Naive thymus-derived CD4-positive, alpha-beta T cell (primary cell): ENCODE measurements at regions of chr3 and their contacts with region 1.

Region 1: GRCh38 chr3:31918179-31919168 is 62.6 kb downstream of the OSBPL10 start:
- DNase-seq: peak in 4 of 9 donors; percentile 3 to 34 (median 29)
- ATAC-seq: no peak
- H3K4me3 ChIP-seq: no peak overlapping the region
- H3K4me3 Mint-ChIP-seq: peak overlapping the region in 9 of 10 donors; percentile 14 to 85 (median 77)
- H3K27ac ChIP-seq: no peak overlapping the region
- H3K27ac Mint-ChIP-seq: peak overlapping the region in 8 of 9 donors; percentile 53 to 96 (median 78)
- H3K4me1 ChIP-seq: peaks cover 0 to 10% of the 10 kb centered on the region in 2 donors
- H3K4me1 Mint-ChIP-seq: peaks cover 3 to 46% (median 22%) of the 10 kb centered on the region in 7 donors
- H3K27me3 ChIP-seq: no peaks in the 10 kb centered on the region
- H3K27me3 Mint-ChIP-seq: no peaks in the 10 kb centered on the region

Region 2: DNA sequence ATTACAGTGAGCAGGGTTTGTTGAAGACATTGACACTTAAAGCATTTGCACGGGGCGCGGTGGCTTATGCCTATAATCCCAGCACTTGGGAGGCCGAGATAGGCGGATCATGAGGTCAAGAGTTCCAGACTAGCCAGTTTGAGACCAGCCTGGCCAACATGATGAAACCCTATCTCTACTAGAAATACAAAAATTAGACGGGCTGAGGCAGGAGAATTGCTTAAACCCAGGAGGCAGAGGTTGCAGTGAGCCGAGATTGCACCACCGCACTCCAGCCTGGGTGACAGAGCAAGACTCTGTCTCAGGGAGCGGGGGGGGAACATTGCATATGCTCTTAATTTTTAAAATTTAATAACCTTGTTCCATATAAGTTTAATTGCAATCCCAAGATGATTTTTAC is 373.8 kb before region 1 on chr3:
- CTCF ChIA-PET with region 1: no interaction called
- POLR2A ChIA-PET with region 1: no interaction called
- intact Hi-C with region 1: loop called in 1 of 2 experiments (anchors 5 kb)
- DNase-seq: no peak
- ATAC-seq: peak; percentile 33
- H3K4me3 ChIP-seq: no peak overlapping the region
- H3K4me3 Mint-ChIP-seq: peak overlapping the region in 9 of 10 donors; percentile 29 to 75 (median 70)
- H3K27ac ChIP-seq: peak overlapping the region; percentile 12
- H3K27ac Mint-ChIP-seq: peak overlapping the region in 8 of 9 donors; percentile 7 to 76 (median 44)
- H3K4me1 ChIP-seq: peaks cover 21 to 32% of the 10 kb centered on the region in 2 donors
- H3K4me1 Mint-ChIP-seq: peaks cover 55 to 99% (median 90%) of the 10 kb centered on the region in 7 donors
- H3K27me3 ChIP-seq: no peaks in the 10 kb centered on the region
- H3K27me3 Mint-ChIP-seq: no peaks in the 10 kb centered on the region

Region 3: GRCh38 chr3:31960793-31961431 is 42.4 kb after region 1 on chr3:
- CTCF ChIA-PET with region 1: no interaction called
- POLR2A ChIA-PET with region 1: no interaction called
- intact Hi-C with region 1: loop called in 1 of 2 experiments (anchors 5 kb)
- DNase-seq: no peak
- ATAC-seq: no peak
- H3K4me3 ChIP-seq: no peak overlapping the region
- H3K4me3 Mint-ChIP-seq: no peak overlapping the region
- H3K27ac ChIP-seq: no peak overlapping the region
- H3K27ac Mint-ChIP-seq: no peak overlapping the region
- H3K4me1 ChIP-seq: peaks cover 0 to 3% of the 10 kb centered on the region in 2 donors
- H3K4me1 Mint-ChIP-seq: peaks cover 5 to 23% (median 11%) of the 10 kb centered on the region in 7 donors
- H3K27me3 ChIP-seq: no peaks in the 10 kb centered on the region
- H3K27me3 Mint-ChIP-seq: peaks cover 0 to 9% (median 0%) of the 10 kb centered on the region in 5 donors

Region 4: GRCh38 chr3:31981206-31982181 is 63.0 kb after region 1 on chr3 and contains the starts of genes OSBPL10 and ZNF860:
- CTCF ChIA-PET with region 1: no interaction called
- POLR2A ChIA-PET with region 1: no interaction called
- intact Hi-C with region 1: loop called in 1 of 2 experiments (anchors 2 kb)
- DNase-seq: peak in 6 of 9 donors; percentile 2 to 32 (median 8)
- ATAC-seq: peak; percentile 63
- H3K4me3 ChIP-seq: peak within 1 kb of the TSS; percentile 56
- H3K4me3 Mint-ChIP-seq: peak within 1 kb of the TSS; percentile 82 to 95 (median 88)
- H3K27ac ChIP-seq: no peak within 1 kb of the TSS
- H3K27ac Mint-ChIP-seq: peak within 1 kb of the TSS in 3 of 9 donors; percentile 10 to 84 (median 16)
- H3K4me1 ChIP-seq: no peaks in the 10 kb centered on the region
- H3K4me1 Mint-ChIP-seq: peaks cover 0 to 26% (median 12%) of the 10 kb centered on the region in 7 donors
- H3K27me3 ChIP-seq: peaks cover 8 to 9% of the 10 kb centered on the region in 2 donors
- H3K27me3 Mint-ChIP-seq: peaks cover 24 to 57% (median 39%) of the 10 kb centered on the region in 5 donors
- total RNA-seq, gene OSBPL10: 0.30 to 6.8 (median 1.5) TPM
- total RNA-seq, gene ZNF860: 0.11 to 0.32 (median 0.15) TPM in 3 of 5 experiments, not detected in the others

Region 5: GRCh38 chr3:32113566-32113965 is 195.1 kb after region 1 on chr3:
- CTCF ChIA-PET with region 1: no interaction called
- POLR2A ChIA-PET with region 1: no interaction called
- intact Hi-C with region 1: loop called in 1 of 2 experiments (anchors 2 kb)
- DNase-seq: no peak
- ATAC-seq: no peak
- H3K4me3 ChIP-seq: no peak overlapping the region
- H3K4me3 Mint-ChIP-seq: peak overlapping the region in 8 of 10 donors; percentile 70 to 90 (median 82)
- H3K27ac ChIP-seq: no peak overlapping the region
- H3K27ac Mint-ChIP-seq: peak overlapping the region in 8 of 9 donors; percentile 74 to 95 (median 92)
- H3K4me1 ChIP-seq: peaks cover 18 to 25% of the 10 kb centered on the region in 2 donors
- H3K4me1 Mint-ChIP-seq: peaks cover 32 to 95% (median 82%) of the 10 kb centered on the region in 7 donors
- H3K27me3 ChIP-seq: no peaks in the 10 kb centered on the region
- H3K27me3 Mint-ChIP-seq: no peaks in the 10 kb centered on the region

Region 6: GRCh38 chr3:32302601-32303398 is 384.3 kb after region 1 on chr3:
- CTCF ChIA-PET with region 1: no interaction called
- POLR2A ChIA-PET with region 1: no interaction called
- intact Hi-C with region 1: loop called in 1 of 2 experiments (anchors 10 kb)
- DNase-seq: peak in 1 of 9 donors; percentile 12
- ATAC-seq: no peak
- H3K4me3 ChIP-seq: peak overlapping the region; percentile 8
- H3K4me3 Mint-ChIP-seq: peak overlapping the region; percentile 72 to 88 (median 80)
- H3K27ac ChIP-seq: peak overlapping the region; percentile 66
- H3K27ac Mint-ChIP-seq: peak overlapping the region; percentile 94 to 99 (median 96)
- H3K4me1 ChIP-seq: peaks cover 29 to 33% of the 10 kb centered on the region in 2 donors
- H3K4me1 Mint-ChIP-seq: peaks cover 27 to 79% (median 70%) of the 10 kb centered on the region in 7 donors
- H3K27me3 ChIP-seq: no peaks in the 10 kb centered on the region
- H3K27me3 Mint-ChIP-seq: no peaks in the 10 kb centered on the region

Region 7: GRCh38 chr3:32438596-32439344 is 520.3 kb after region 1 on chr3:
- CTCF ChIA-PET with region 1: no interaction called
- POLR2A ChIA-PET with region 1: no interaction called
- intact Hi-C with region 1: loop called in 1 of 2 experiments (anchors 10 kb)
- DNase-seq: peak in 1 of 9 donors; percentile 24
- ATAC-seq: peak; percentile 65
- H3K4me3 ChIP-seq: no peak overlapping the region
- H3K4me3 Mint-ChIP-seq: peak overlapping the region in 6 of 10 donors; percentile 1 to 80 (median 46)
- H3K27ac ChIP-seq: no peak overlapping the region
- H3K27ac Mint-ChIP-seq: peak overlapping the region; percentile 45 to 87 (median 80)
- H3K4me1 ChIP-seq: peaks cover 42 to 47% of the 10 kb centered on the region in 2 donors
- H3K4me1 Mint-ChIP-seq: peaks cover 29 to 88% (median 78%) of the 10 kb centered on the region in 7 donors
- H3K27me3 ChIP-seq: no peaks in the 10 kb centered on the region
- H3K27me3 Mint-ChIP-seq: no peaks in the 10 kb centered on the region

Region 8: GRCh38 chr3:33131331-33132018 is 1213.0 kb after region 1 on chr3:
- CTCF ChIA-PET with region 1: no interaction called
- POLR2A ChIA-PET with region 1: no interaction called
- intact Hi-C with region 1: no loop called
- DNase-seq: peak in 6 of 9 donors; percentile 5 to 46 (median 37)
- ATAC-seq: peak; percentile 80
- H3K4me3 ChIP-seq: no peak overlapping the region
- H3K4me3 Mint-ChIP-seq: no peak overlapping the region
- H3K27ac ChIP-seq: no peak overlapping the region
- H3K27ac Mint-ChIP-seq: no peak overlapping the region
- H3K4me1 ChIP-seq: no peaks in the 10 kb centered on the region
- H3K4me1 Mint-ChIP-seq: peaks cover 2 to 12% (median 11%) of the 10 kb centered on the region in 7 donors
- H3K27me3 ChIP-seq: no peaks in the 10 kb centered on the region
- H3K27me3 Mint-ChIP-seq: no peaks in the 10 kb centered on the region